ENCODE measurements at regions of chr16 and their contacts with region 1.

Region 1: DNA sequence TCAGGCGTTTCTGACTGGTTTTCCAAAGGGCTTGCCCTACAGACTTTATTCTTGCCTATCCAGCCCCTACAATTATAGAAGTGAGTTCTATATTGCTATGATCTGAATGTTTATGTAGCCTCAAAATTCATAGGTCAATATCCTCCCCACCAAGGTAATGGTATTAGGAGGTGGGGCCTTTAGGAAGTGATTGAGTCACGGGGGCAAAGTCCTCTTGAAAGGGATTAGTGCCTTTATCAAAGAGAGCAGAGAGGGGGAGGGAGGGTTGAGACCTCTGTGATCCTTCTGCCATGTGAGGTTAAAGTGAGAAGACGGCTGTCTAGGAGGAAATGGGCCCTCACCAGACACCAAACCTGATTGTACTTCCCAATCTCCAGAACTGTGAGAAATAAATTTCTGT is 931 bp upstream of the CPHXL start:
- DNase-seq: no peak
- ATAC-seq: no peak
- H3K4me3 ChIP-seq: no peak overlapping the region
- H3K4me3 Mint-ChIP-seq: no peak overlapping the region
- H3K27ac ChIP-seq: no peak overlapping the region
- H3K27ac Mint-ChIP-seq: no peak overlapping the region
- H3K4me1 ChIP-seq: no peaks in the 10 kb centered on the region
- H3K4me1 Mint-ChIP-seq: no peaks in the 10 kb centered on the region
- H3K27me3 ChIP-seq: no peaks in the 10 kb centered on the region
- H3K27me3 Mint-ChIP-seq: no peaks in the 10 kb centered on the region

Region 2: GRCh38 chr16:75660726-75661302 is 66.4 kb before region 1 on chr16:
- CTCF ChIA-PET with region 1: no interaction called
- POLR2A ChIA-PET with region 1: interaction called in 1 of 2 experiments, 16 read pairs
- DNase-seq: no peak
- ATAC-seq: no peak
- H3K4me3 ChIP-seq: no peak overlapping the region
- H3K4me3 Mint-ChIP-seq: no peak overlapping the region
- H3K27ac ChIP-seq: no peak overlapping the region
- H3K27ac Mint-ChIP-seq: no peak overlapping the region
- H3K4me1 ChIP-seq: no peaks in the 10 kb centered on the region
- H3K4me1 Mint-ChIP-seq: peaks cover 14 to 16% (median 15%) of the 10 kb centered on the region in 3 donors
- H3K27me3 ChIP-seq: no peaks in the 10 kb centered on the region
- H3K27me3 Mint-ChIP-seq: no peaks in the 10 kb centered on the region

Region 3: GRCh38 chr16:75805944-75806343 is 78.7 kb after region 1 on chr16:
- CTCF ChIA-PET with region 1: no interaction called
- POLR2A ChIA-PET with region 1: no interaction called
- DNase-seq: no peak
- ATAC-seq: no peak
- H3K4me3 ChIP-seq: no peak overlapping the region
- H3K4me3 Mint-ChIP-seq: no peak overlapping the region
- H3K27ac ChIP-seq: no peak overlapping the region
- H3K27ac Mint-ChIP-seq: no peak overlapping the region
- H3K4me1 ChIP-seq: no peaks in the 10 kb centered on the region
- H3K4me1 Mint-ChIP-seq: no peaks in the 10 kb centered on the region
- H3K27me3 ChIP-seq: peaks cover 0 to 11% of the 10 kb centered on the region in 2 experiments
- H3K27me3 Mint-ChIP-seq: peaks cover 21 to 25% of the 10 kb centered on the region in 2 donors

Measured in T-cell (primary cell).